Ascending aorta (tissue), 2 donors: ENCODE measurements at regions of chr2 and their contacts with region 1.

Region 1: GRCh38 chr2:121530212-121530705 is 421 bp upstream of the RNU4ATAC start:
- DNase-seq: peak in 1 of 2 donors; percentile 86
- H3K4me3 ChIP-seq: peak overlapping the region; percentile 79 to 88
- H3K27ac ChIP-seq: peak overlapping the region; percentile 96 to 99
- H3K4me1 ChIP-seq: peaks cover 7 to 13% of the 10 kb centered on the region in 2 donors
- H3K27me3 ChIP-seq: no peaks in the 10 kb centered on the region
- CTCF ChIP-seq: no peak

Region 2: DNA sequence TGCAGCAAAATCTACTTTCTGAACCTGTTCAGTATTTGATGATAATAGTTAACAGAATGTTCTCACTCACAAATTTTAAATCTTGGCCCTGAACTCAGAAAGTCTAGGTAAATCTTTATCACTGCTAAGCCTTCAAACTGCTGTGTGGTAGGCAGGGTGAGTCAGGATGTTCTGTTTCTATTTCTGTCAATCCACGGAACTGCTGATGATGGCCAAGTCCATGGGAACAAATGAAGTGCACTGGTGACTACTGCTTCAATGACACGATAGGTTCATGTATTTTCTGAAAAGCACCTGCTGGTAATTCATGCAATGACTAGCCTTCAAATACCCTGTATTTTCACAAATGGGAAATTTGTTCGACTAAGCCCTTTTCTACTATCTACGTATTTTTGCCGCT is 192.2 kb after region 1 on chr2:
- intact Hi-C with region 1: loop called (anchors 1 kb)
- DNase-seq: no peak
- H3K4me3 ChIP-seq: no peak overlapping the region
- H3K27ac ChIP-seq: peak overlapping the region; percentile 58 to 78
- H3K4me1 ChIP-seq: no peaks in the 10 kb centered on the region
- H3K27me3 ChIP-seq: no peaks in the 10 kb centered on the region
- CTCF ChIP-seq: no peak

Region 3: DNA sequence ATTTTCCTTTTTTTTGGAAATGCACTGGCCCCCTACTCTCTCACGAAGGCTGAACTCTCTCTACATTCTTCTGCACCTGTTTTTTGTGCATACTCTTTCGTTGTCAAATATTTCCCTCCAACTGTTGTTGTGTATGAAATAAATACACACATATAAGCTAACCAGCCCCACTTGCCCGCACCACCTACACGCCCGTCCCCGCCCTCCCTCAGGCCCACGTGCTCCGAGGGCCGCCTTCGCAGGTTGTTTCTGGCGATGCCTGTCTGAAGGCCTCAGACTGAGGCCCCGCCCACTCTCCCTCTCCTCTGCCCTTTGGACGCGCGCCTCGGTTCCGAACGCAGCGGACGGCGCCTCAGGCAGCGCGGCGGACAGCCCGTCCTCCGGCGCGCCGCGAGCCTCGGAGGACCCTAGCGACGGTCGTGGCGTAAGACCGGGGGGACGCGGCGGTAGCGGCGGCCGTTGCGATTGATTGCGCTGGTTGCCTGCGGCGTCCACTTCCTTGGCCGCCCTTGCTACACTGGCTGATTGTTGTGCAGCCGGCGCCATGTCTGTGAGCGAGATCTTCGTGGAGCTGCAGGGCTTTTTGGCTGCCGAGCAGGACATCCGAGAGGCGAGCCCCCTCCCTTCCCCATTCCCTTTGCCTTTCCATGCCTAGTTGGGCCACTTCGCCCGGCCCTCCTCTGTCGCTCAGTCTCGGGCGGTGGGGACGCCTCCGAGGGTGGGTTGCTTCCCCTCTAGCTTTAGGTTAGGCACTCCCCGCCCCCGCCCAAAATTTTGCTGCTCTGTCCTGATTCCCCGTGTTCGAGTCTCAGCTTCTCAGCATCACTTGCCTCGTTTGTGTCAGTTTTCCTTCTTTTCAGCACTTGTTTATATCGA is 225.2 kb after region 1 on chr2 and contains the start of gene TSN:
- intact Hi-C with region 1: loop called (anchors 1 kb)
- DNase-seq: peak; percentile 87 to 98
- H3K4me3 ChIP-seq: peak within 1 kb of the TSS; percentile 90 to 94
- H3K27ac ChIP-seq: peak within 1 kb of the TSS; percentile 71 to 78
- H3K4me1 ChIP-seq: peaks cover 5 to 18% of the 10 kb centered on the region in 2 donors
- H3K27me3 ChIP-seq: no peaks in the 10 kb centered on the region
- CTCF ChIP-seq: peak in 1 of 3 experiments; percentile 4
- total RNA-seq, gene TSN: 42.6 TPM